Heart left ventricle (tissue), 16 donors: ENCODE measurements at regions of chr5 and their contacts with region 1.

Region 1: DNA sequence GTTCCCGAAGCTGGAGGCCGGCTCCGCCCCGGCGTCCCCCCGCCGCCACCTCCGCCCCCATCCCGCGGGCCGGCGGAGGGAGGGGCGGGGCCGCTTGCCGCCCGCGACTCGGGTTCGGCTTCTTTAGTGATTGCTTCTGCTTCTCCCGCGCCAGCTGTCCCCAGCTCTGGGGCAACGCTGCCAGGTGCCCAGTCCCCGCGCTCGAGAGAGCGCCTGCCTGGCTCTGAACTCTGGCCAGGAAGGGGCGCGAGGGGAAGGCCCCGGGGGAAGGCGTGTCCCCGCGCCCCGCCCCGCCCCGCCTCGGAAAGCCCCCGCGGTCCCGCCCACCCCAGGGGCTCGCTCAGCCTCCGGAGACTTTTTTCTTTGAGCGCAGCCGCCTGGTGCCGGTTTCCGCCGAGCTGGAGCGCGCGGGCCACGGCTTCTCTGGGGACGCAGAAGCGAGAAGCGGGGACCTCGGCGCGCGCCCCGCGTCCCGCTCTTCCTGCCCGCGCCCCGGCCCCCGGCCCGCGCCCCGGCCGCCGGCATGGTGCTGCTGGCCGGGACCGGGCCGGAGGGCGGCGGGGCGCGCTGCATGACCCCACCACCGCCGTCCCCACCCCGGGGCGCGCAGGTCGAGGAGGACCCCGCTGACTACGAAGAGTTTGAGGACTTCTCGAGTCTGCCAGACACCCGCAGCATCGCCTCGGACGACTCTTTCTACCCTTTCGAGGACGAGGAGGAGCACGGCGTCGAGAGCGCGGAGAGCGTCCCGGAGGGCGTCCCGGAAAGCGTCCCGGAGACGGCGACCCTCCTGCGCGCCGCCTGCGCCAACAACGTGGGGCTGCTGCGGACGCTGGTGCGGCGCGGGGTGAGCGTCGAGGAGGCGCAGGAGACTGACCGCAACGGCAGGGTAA is at the start of gene ANKRD33B:
- DNase-seq: peak; percentile 75 to 83 (median 79)
- ATAC-seq: peak; percentile 33 to 80 (median 79)
- H3K4me3 ChIP-seq: peak within 1 kb of the TSS; percentile 58 to 85 (median 76)
- H3K27ac ChIP-seq: peak within 1 kb of the TSS; percentile 32 to 88 (median 77)
- H3K4me1 ChIP-seq: peaks cover 0 to 52% (median 31%) of the 10 kb centered on the region in 12 donors
- H3K27me3 ChIP-seq: peaks cover 0 to 26% (median 0%) of the 10 kb centered on the region in 9 donors
- CTCF ChIP-seq: no peak
- POLR2A ChIP-seq: peak in 1 of 2 donors; percentile 40
- total RNA-seq, gene ANKRD33B: 1.7 to 33.8 (median 5.2) TPM

Region 2: DNA sequence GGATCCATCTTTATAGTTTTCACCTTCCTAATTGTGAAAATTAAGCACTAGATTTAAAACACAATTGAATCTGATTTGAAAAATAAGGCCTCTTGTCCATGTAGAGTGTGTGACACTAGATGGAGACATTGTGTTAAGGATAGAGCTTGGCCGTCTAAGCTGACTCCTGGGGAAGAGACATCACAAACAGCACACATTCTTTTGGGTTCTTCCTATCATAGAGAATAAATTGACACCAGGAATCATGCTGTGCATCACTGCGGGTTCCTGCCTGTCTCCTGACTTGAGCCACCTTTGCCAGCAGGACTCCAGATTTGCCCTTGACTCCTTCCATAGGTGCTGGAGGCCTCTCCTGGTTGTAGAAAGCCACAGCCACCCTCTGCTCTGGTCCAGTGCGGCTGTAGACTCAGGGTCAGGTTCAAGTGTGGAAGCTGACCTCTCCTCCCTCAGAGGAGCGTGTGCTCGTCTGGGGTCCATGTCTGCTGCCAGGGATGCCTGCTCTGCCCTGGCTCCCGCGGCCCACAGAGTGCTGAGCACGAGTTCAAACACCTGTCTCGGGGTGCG is 111.3 kb before region 1 on chr5:
- intact Hi-C with region 1: loop called in 4 of 10 experiments (anchors 2 to 10 kb)
- DNase-seq: no peak
- ATAC-seq: peak; percentile 74 to 84 (median 82)
- H3K4me3 ChIP-seq: no peak overlapping the region
- H3K27ac ChIP-seq: no peak overlapping the region
- H3K4me1 ChIP-seq: peaks cover 3 to 25% (median 12%) of the 10 kb centered on the region in 12 donors
- H3K27me3 ChIP-seq: no peaks in the 10 kb centered on the region
- CTCF ChIP-seq: peak; percentile 63 to 90 (median 80)
- POLR2A ChIP-seq: no peak

Region 3: GRCh38 chr5:10457682-10458574 is 106.3 kb before region 1 on chr5:
- intact Hi-C with region 1: loop called in 5 of 10 experiments (anchors 2 to 10 kb)
- DNase-seq: peak in 3 of 5 donors; percentile 40 to 65 (median 50)
- ATAC-seq: peak; percentile 24 to 47 (median 37)
- H3K4me3 ChIP-seq: no peak overlapping the region
- H3K27ac ChIP-seq: peak overlapping the region in 3 of 12 donors; percentile 25 to 55 (median 39)
- H3K4me1 ChIP-seq: peaks cover 6 to 47% (median 26%) of the 10 kb centered on the region in 12 donors
- H3K27me3 ChIP-seq: no peaks in the 10 kb centered on the region
- CTCF ChIP-seq: peak in 5 of 12 donors; percentile 11 to 41 (median 19)
- POLR2A ChIP-seq: no peak

Region 4: DNA sequence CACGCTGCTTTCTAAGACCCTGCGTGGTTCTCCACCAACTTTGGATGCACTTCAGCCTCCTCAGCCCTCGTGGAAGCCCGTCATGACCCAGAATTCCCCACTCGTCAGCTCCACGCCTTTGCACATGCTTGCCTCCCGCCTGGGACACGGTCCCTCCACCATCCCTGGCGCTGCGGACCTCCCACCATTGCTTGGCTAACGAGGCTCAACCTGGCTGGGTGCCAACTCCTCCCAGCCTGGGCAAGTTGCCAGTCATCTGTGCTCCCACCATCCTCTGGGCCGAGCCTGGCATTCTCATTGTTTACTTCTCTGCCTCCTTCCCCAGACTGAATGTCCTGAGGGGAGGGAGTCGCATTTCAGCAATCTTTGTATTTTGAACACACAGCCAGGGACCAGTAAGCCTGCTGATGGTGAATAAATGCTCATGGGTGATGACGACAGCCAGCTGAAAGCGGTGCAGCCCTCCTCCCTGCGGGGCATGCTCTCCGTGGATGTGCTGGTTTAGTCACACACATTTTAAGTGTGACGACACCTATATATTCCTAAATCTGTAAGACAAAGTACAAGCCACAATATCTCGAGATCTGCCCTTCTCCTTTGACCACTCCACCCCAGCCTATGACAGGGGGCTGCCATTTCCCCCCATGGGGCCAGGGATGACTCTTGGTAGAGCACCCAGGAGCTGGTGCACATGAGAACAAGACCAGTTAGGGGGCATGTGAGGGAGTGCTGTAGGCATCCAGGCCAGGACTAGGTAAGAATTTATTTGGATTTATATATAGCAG is 37.2 kb after region 1 on chr5:
- intact Hi-C with region 1: loop called in 8 of 10 experiments (anchors 5 kb)
- DNase-seq: peak; percentile 88 to 90 (median 89)
- ATAC-seq: peak; percentile 90 to 92 (median 91)
- H3K4me3 ChIP-seq: peak overlapping the region in 4 of 12 donors; percentile 3 to 22 (median 14)
- H3K27ac ChIP-seq: peak overlapping the region; percentile 17 to 89 (median 80)
- H3K4me1 ChIP-seq: peaks cover 0 to 45% (median 26%) of the 10 kb centered on the region in 12 donors
- H3K27me3 ChIP-seq: no peaks in the 10 kb centered on the region
- CTCF ChIP-seq: no peak
- POLR2A ChIP-seq: no peak

Region 5: GRCh38 chr5:10607666-10608073 is 43.5 kb after region 1 on chr5:
- intact Hi-C with region 1: loop called in 8 of 10 experiments (anchors 5 kb)
- DNase-seq: peak in 4 of 5 donors; percentile 54 to 76 (median 66)
- ATAC-seq: peak; percentile 81 to 89 (median 88)
- H3K4me3 ChIP-seq: peak overlapping the region in 4 of 12 donors; percentile 2 to 16 (median 10)
- H3K27ac ChIP-seq: peak overlapping the region; percentile 64 to 92 (median 76)
- H3K4me1 ChIP-seq: peaks cover 0 to 38% (median 20%) of the 10 kb centered on the region in 12 donors
- H3K27me3 ChIP-seq: no peaks in the 10 kb centered on the region
- CTCF ChIP-seq: peak in 8 of 12 donors; percentile 6 to 46 (median 22)
- POLR2A ChIP-seq: no peak

Region 6: DNA sequence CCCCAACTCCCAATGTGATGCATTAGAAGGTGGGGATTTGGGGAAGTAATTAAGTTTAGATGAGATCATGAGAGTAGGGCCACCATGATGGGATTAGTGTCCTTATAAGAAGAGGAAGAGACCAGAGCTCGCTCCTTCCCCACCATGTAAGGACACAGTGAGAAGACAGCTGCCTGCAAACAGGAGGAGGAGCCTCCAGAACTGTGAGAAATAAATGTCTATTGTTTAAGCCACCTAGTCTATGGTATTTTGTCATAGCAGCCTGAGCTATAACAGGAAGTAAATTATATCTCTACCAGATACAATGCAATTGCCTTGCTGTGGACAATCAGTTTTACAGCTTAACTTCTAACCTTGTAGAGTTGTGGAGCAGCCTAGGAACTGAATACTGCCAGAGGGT is 57.6 kb after region 1 on chr5:
- intact Hi-C with region 1: loop called in 5 of 10 experiments (anchors 2 to 10 kb)
- DNase-seq: no peak
- ATAC-seq: no peak
- H3K4me3 ChIP-seq: no peak overlapping the region
- H3K27ac ChIP-seq: no peak overlapping the region
- H3K4me1 ChIP-seq: peaks cover 0 to 34% (median 17%) of the 10 kb centered on the region in 12 donors
- H3K27me3 ChIP-seq: no peaks in the 10 kb centered on the region
- CTCF ChIP-seq: no peak
- POLR2A ChIP-seq: no peak

Region 7: GRCh38 chr5:10627160-10627701 is 63.0 kb after region 1 on chr5:
- intact Hi-C with region 1: loop called in 5 of 10 experiments (anchors 2 to 10 kb)
- DNase-seq: no peak
- ATAC-seq: peak in 1 of 4 donors; percentile 6
- H3K4me3 ChIP-seq: peak overlapping the region in 9 of 12 donors; percentile 8 to 47 (median 35)
- H3K27ac ChIP-seq: peak overlapping the region in 9 of 12 donors; percentile 2 to 77 (median 28)
- H3K4me1 ChIP-seq: peaks cover 0 to 48% (median 25%) of the 10 kb centered on the region in 12 donors
- H3K27me3 ChIP-seq: no peaks in the 10 kb centered on the region
- CTCF ChIP-seq: no peak
- POLR2A ChIP-seq: no peak